Activated B cell treated with CpG ODN at 0.5 μM for 24 hours (primary cell): ENCODE measurements at regions of chr7 and their contacts with region 1.

Region 1: GRCh38 chr7:6706677-6707544 is at the start of gene ZNF12:
- DNase-seq: peak; percentile 96
- ATAC-seq: peak; percentile 90
- H3K4me3 Mint-ChIP-seq: peak within 1 kb of the TSS; percentile 90
- H3K27ac Mint-ChIP-seq: peak within 1 kb of the TSS; percentile 84
- H3K4me1 Mint-ChIP-seq: peaks cover 41% of the 10 kb centered on the region
- H3K27me3 Mint-ChIP-seq: peaks cover 3% of the 10 kb centered on the region
- CTCF ChIP-seq: no peak
- total RNA-seq, gene ZNF12: 31.3 and 35.6 TPM in 2 replicates

Region 2: GRCh38 chr7:6516387-6516983 is 190.4 kb before region 1 on chr7:
- CTCF ChIA-PET with region 1: no interaction called
- POLR2A ChIA-PET with region 1: interaction called, 11 read pairs
- intact Hi-C with region 1: no loop called
- DNase-seq: peak; percentile 42
- ATAC-seq: peak; percentile 78
- H3K4me3 Mint-ChIP-seq: peak overlapping the region; percentile 81
- H3K27ac Mint-ChIP-seq: peak overlapping the region; percentile 78
- H3K4me1 Mint-ChIP-seq: peaks cover 18% of the 10 kb centered on the region
- H3K27me3 Mint-ChIP-seq: no peaks in the 10 kb centered on the region
- CTCF ChIP-seq: peak; percentile 76

Region 3: DNA sequence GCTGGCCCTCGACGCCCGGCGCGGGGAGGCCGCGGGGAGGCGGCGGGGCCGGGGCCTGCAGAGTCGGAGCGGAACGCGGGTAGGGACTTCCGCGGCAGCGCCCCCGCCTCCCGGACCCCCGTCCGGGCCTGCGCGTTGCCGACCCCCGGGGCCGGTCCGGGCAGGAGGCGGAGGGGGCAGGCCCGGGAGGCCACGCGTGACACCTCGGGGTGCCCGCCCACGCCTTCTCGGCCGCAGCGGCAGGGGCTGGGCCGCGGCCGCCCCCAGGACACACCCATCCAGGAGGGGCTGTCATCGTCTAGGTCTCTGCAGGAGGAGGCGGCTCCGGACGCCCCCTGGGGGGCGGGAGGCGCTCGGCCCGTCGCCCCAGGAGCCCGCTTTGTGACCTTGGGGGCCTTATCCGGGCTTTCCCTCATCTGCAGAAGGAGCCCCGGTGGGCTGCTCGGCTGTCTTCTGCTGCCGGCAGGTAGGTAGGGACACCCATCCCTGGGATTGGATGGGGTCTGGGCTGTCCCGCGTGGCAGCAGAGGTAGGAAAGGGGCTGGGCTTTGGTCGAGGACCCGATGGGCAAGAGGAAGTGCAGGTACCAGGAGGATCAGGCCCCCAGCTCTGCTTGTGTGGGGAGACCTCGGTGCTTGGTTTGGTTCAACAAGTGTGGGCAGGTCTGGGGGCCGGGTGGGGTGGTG is 69.2 kb before region 1 on chr7:
- CTCF ChIA-PET with region 1: no interaction called
- POLR2A ChIA-PET with region 1: interaction called, 6 read pairs
- intact Hi-C with region 1: loop called (anchors 1 kb)
- DNase-seq: peak; percentile 68
- ATAC-seq: peak; percentile 86
- H3K4me3 Mint-ChIP-seq: peak overlapping the region; percentile 86
- H3K27ac Mint-ChIP-seq: peak overlapping the region; percentile 76
- H3K4me1 Mint-ChIP-seq: peaks cover 29% of the 10 kb centered on the region
- H3K27me3 Mint-ChIP-seq: no peaks in the 10 kb centered on the region
- CTCF ChIP-seq: no peak

Region 4: GRCh38 chr7:6652446-6653011 is 54.4 kb before region 1 on chr7:
- CTCF ChIA-PET with region 1: no interaction called
- POLR2A ChIA-PET with region 1: no interaction called
- intact Hi-C with region 1: no loop called
- DNase-seq: no peak
- ATAC-seq: no peak
- H3K4me3 Mint-ChIP-seq: no peak overlapping the region
- H3K27ac Mint-ChIP-seq: no peak overlapping the region
- H3K4me1 Mint-ChIP-seq: no peaks in the 10 kb centered on the region
- H3K27me3 Mint-ChIP-seq: no peaks in the 10 kb centered on the region
- CTCF ChIP-seq: no peak

Region 5: DNA sequence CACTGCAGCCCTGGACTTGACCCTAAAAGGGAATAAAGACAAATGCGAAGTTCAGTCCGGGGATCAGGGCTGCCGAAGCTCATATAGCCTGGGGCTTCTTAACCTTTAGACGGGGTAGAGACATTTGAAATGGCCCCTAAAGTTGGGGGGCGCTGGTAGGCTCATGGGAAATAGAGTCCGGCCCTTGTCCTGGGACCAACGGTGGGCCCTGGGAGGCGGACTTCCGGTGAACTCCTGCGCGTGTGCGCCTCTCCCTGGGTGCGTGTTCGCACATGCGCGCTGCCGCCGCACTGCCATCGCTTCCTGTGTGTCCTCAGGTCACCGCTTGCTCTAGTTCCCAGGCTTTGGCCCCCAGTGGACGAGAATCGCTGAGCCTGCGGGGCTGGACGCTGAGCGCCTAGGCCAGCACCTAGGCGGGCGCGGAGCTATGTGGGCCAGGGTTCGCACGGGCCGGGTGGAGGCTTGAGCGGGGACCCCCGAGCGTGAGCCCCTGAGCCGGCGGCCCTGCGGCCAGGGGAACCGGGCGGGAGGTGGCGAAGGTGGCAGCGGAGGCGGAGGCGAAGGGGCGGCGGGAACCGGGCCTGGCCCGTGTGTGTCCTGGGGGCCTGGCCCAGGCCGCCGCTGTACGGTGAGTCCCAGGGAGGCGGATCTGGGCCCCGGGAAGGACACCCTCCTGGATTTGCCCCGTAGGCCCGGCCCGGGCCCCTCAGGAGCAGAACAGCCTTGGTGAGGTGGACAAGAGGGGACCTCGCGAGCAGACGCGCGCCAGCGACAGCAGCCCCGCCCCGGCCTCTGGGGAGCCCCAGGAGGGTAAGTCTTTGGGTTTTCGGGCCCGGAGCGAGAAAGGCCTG is 22.8 kb after region 1 on chr7:
- CTCF ChIA-PET with region 1: no interaction called
- POLR2A ChIA-PET with region 1: interaction called, 6 read pairs
- intact Hi-C with region 1: loop called (anchors 1 kb)
- DNase-seq: peak; percentile 75
- ATAC-seq: peak; percentile 88
- H3K4me3 Mint-ChIP-seq: peak overlapping the region; percentile 88
- H3K27ac Mint-ChIP-seq: peak overlapping the region; percentile 78
- H3K4me1 Mint-ChIP-seq: peaks cover 40% of the 10 kb centered on the region
- H3K27me3 Mint-ChIP-seq: no peaks in the 10 kb centered on the region
- CTCF ChIP-seq: no peak